ENCODE measurements at regions of chr11 and their contacts with region 1.

Region 1: GRCh38 chr11:66835768-66836405 is 7.4 kb upstream of the RCE1 start:
- DNase-seq: no peak
- ATAC-seq: no peak

Region 2: DNA sequence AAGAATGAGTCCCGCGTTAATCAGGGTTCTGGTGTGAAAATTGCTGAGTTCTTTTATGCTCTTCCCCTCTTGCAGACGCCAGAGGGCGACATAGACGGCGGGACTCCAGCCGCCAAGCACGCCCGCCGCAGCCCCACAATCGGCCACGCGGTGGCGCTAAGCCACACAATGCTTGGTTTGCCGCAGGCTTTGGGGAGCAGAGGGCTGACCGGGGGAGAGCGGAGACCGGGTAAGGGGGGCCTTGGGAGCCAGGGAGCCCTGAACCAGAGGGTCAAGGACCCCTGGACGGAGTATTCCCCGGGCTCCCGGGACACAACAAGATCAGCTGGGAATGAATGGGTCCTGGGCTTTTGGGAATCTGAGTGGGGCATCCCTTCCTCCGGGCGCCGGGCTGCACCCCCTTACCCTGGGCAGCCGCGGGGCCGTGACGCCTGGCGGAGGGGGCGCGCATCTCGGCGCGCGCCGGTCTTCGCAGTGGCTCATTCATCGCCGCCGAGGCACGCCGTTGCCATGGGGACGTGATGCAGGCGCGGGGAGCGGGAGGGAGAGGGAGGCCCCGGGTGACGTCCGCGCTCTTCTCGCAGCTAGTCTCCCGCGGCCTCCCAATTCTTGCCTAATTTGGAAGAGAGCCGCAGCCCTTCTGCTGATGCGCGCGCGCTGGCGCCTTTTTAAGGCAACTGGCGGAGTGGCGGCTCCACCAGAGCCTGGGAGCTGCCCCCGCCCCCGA is 427.2 kb before region 1 on chr11:
- intact Hi-C with region 1: loop called (anchors 5 kb)
- DNase-seq: peak; percentile 94
- ATAC-seq: peak; percentile 97

Region 3: GRCh38 chr11:66570117-66570819 is 265.6 kb before region 1 on chr11:
- intact Hi-C with region 1: loop called (anchors 5 kb)
- DNase-seq: no peak
- ATAC-seq: no peak

Region 4: GRCh38 chr11:66694732-66695207 is 141.1 kb before region 1 on chr11:
- intact Hi-C with region 1: loop called (anchors 2 kb)
- DNase-seq: peak; percentile 89
- ATAC-seq: peak; percentile 91

Region 5: DNA sequence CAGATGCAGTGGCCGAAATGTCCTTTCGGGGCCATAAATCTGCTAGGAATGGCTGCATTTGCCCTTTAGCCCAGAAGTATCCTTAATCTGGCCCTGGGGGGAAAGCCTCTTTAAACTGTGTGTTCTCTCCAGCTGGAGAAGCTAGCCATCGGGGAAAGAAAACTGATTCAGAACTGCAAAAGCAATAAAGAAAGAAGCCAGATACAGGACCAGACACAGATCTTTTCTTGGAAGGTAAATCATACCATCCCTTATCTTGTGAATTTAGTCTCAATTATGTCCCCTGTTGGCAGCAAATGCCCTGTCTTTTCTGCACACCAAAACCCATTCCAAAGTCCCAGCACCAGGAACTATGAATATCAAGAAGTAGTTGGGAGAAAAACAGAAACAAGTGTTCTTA is 96.7 kb after region 1 on chr11:
- intact Hi-C with region 1: no loop called
- DNase-seq: no peak
- ATAC-seq: no peak

Region 6: DNA sequence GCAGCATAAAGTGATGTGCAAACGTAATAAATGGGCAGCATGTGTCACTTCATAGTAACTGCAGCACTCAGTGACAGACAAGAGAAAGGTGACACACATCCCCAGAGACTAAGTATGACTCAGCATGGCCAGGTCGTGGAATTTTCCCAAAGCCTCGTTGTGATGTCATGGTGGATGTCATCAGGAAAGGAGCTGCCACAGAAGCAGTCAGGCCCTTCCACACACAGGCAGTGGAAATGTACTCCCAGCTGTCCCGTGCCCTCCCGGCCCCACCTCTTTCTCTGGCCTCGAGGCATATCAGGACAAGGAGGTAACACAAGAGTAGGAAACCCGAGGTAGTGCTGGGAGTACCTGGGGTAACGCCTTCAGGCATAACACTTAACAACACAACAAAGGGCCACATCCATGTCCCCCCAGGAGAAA is 114.2 kb after region 1 on chr11:
- intact Hi-C with region 1: no loop called
- DNase-seq: no peak
- ATAC-seq: no peak

Region 7: GRCh38 chr11:66981976-66982578 is 146.2 kb after region 1 on chr11:
- intact Hi-C with region 1: no loop called
- DNase-seq: peak; percentile 93
- ATAC-seq: peak; percentile 34